Transverse colon (tissue), 4 donors: ENCODE measurements at regions of chr6 and their contacts with region 1.

Region 1: DNA sequence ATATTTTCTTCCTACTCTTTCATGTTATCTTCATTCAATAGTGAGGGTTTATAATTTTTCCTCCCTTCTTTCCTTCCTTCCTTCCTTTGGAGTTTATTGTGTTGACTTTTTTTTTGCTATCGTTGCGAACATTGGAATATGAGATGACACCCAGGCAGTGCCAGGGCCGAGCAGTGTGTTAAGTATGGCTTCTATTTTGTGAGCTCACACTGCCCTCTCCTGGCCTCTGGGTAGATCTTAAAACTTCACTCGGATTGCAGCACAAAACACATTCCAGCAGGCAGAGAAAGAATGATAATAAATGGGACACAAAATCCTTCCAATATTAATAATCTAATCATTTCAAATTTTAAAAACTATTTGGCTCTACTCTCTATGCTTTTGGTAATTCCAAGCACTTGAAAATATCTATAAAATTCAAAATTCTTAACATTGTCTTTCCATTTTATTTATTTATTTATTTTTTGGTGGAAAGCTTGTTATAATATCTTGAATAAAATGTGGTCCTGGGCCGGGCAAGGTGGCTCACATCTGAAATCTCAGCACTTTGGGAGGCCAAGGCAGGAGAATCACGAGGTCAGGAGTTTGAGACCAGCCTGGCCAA is 147.4 kb upstream of the OLIG3 start:
- DNase-seq: peak; percentile 75
- H3K4me3 ChIP-seq: no peak overlapping the region
- H3K27ac ChIP-seq: no peak overlapping the region
- H3K4me1 ChIP-seq: peaks cover 0 to 4% (median 2%) of the 10 kb centered on the region in 4 donors
- H3K27me3 ChIP-seq: no peaks in the 10 kb centered on the region
- CTCF ChIP-seq: peak; percentile 62 to 78 (median 64)
- EP300 ChIP-seq: no peak
- POLR2A ChIP-seq: no peak

Region 2: DNA sequence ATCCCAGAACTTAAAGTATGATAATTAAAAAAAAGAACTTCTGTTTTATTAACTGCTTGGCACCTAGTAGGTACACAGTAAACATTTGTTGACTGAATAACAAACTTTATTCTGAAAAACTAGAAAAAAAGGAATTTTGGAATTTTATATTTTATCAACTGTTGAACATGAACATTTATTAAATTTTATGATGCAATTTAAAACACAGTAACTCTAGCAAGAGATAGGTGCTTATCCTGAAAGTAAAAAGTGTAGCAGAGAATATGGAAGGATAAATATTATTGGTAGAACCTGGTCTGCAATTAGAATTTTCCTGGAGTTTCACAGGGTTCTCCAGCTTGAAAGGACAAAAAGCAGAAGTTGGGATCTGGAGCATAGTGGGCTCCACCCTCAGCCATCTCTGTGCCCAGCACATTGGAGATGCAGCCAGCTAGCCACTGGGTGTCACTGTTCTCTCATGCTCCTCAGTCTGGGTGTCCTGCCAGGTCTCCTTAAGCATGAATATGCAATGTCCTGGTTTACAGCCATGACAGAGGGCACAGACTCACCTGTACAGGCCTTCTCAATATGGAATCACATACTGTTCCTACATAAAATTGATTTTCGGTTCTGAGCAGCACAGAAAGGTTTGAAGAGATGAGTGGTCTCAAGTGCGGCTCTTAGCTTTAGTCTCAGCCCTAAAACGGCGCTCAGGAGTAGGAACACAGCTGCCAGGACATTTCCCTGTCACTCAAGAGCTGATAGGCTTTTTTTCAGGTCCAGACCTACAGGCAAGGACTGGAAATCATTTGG is 565.1 kb before region 1 on chr6:
- in situ Hi-C with region 1: loop called in 3 of 4 experiments (anchors 10 to 25 kb)
- intact Hi-C with region 1: no loop called
- DNase-seq: peak; percentile 80
- H3K4me3 ChIP-seq: no peak overlapping the region
- H3K27ac ChIP-seq: no peak overlapping the region
- H3K4me1 ChIP-seq: no peaks in the 10 kb centered on the region
- H3K27me3 ChIP-seq: no peaks in the 10 kb centered on the region
- CTCF ChIP-seq: peak; percentile 57 to 75 (median 64)
- EP300 ChIP-seq: no peak
- POLR2A ChIP-seq: no peak

Region 3: GRCh38 chr6:137089305-137089704 is 552.3 kb before region 1 on chr6:
- in situ Hi-C with region 1: loop called (anchors 10 to 25 kb)
- intact Hi-C with region 1: no loop called
- DNase-seq: peak; percentile 45
- H3K4me3 ChIP-seq: no peak overlapping the region
- H3K27ac ChIP-seq: no peak overlapping the region
- H3K4me1 ChIP-seq: peaks cover 0 to 33% (median 8%) of the 10 kb centered on the region in 4 donors
- H3K27me3 ChIP-seq: no peaks in the 10 kb centered on the region
- CTCF ChIP-seq: no peak
- EP300 ChIP-seq: no peak
- POLR2A ChIP-seq: no peak

Region 4: DNA sequence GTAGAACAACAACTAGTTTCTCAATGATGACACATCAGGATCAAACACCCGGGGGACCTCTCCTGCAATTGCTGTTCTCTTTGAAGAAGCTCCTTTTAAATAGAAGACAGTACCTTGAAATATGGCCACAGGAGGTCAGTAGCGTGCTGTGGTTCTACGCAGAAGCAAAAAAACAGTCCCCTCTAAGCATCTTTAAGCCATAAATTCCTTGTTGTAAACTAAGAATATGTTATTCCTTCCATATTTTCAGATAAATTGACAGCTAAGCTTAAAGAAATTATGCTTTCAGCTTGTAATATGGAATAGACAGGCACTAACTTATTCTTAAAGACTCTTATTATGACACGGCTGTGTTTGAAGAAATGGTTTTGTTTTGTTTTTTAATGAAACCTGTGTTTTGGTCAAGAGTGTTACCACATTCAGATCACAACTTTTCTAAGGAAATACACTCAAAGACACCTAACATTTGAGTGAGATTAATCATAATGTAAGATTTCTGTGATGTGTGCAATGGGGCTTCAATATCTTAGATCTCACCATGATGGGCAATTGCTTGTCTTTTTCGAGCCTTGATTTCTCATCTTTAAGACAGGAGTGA is 547.1 kb before region 1 on chr6:
- in situ Hi-C with region 1: loop called (anchors 10 to 25 kb)
- intact Hi-C with region 1: no loop called
- DNase-seq: peak; percentile 56
- H3K4me3 ChIP-seq: no peak overlapping the region
- H3K27ac ChIP-seq: no peak overlapping the region
- H3K4me1 ChIP-seq: peaks cover 0 to 30% (median 8%) of the 10 kb centered on the region in 4 donors
- H3K27me3 ChIP-seq: no peaks in the 10 kb centered on the region
- CTCF ChIP-seq: peak; percentile 67 to 70 (median 69)
- EP300 ChIP-seq: no peak
- POLR2A ChIP-seq: no peak

Region 5: GRCh38 chr6:137271245-137272183 is 370.1 kb before region 1 on chr6:
- in situ Hi-C with region 1: loop called in 2 of 4 experiments (anchors 25 kb)
- intact Hi-C with region 1: loop called (anchors 5 kb)
- DNase-seq: no peak
- H3K4me3 ChIP-seq: no peak overlapping the region
- H3K27ac ChIP-seq: no peak overlapping the region
- H3K4me1 ChIP-seq: no peaks in the 10 kb centered on the region
- H3K27me3 ChIP-seq: no peaks in the 10 kb centered on the region
- CTCF ChIP-seq: peak; percentile 81 to 90 (median 85)
- EP300 ChIP-seq: no peak
- POLR2A ChIP-seq: no peak

Region 6: GRCh38 chr6:137291441-137291840 is 350.1 kb before region 1 on chr6:
- in situ Hi-C with region 1: loop called in 1 of 4 experiments (anchors 25 kb)
- intact Hi-C with region 1: no loop called
- DNase-seq: peak; percentile 42
- H3K4me3 ChIP-seq: no peak overlapping the region
- H3K27ac ChIP-seq: no peak overlapping the region
- H3K4me1 ChIP-seq: no peaks in the 10 kb centered on the region
- H3K27me3 ChIP-seq: no peaks in the 10 kb centered on the region
- CTCF ChIP-seq: no peak
- EP300 ChIP-seq: no peak
- POLR2A ChIP-seq: no peak

Region 7: GRCh38 chr6:137313928-137314855 is 327.4 kb before region 1 on chr6:
- in situ Hi-C with region 1: loop called in 2 of 4 experiments (anchors 25 kb)
- intact Hi-C with region 1: no loop called
- DNase-seq: peak; percentile 75
- H3K4me3 ChIP-seq: peak overlapping the region in 1 of 4 donors; percentile 6
- H3K27ac ChIP-seq: no peak overlapping the region
- H3K4me1 ChIP-seq: peaks cover 0 to 13% (median 7%) of the 10 kb centered on the region in 4 donors
- H3K27me3 ChIP-seq: no peaks in the 10 kb centered on the region
- CTCF ChIP-seq: peak; percentile 76 to 85 (median 83)
- EP300 ChIP-seq: no peak
- POLR2A ChIP-seq: no peak